A549 (cell line): ENCODE measurements at regions of chr1 and their contacts with region 1.

Region 1: DNA sequence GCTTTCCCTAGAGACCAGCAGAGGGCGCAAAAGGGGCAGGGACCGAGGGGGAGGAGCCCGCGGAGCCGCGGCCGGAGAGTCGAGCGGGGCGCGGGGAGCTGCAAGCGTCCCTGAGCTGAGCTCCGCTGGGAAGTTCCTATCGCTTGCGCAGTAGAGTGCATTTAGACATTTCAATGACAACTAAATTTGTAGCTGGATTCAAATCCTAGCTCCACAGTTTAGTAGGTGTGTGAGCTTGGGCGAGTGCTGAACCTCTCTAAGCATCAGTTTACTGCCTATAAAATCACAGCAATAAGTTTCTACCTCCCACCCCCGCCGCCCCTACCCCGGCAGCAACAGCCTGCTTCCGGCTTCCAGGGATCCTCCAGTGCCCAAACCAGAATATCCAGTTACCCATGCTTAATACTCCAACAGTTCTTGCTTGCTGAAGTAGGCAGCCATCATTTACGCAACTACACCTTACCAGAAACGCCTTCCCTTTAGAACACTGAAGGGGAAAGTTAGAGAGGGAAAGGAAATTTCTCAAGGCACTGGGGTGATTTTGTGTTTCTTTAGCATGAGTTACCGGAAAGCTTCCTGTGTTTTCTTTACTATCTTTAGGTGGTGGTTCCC is 9.1 kb downstream of the TLR5 start:
- DNase-seq: peak; percentile 78 to 87
- ATAC-seq: peak; percentile 77 to 90
- H3K4me3 ChIP-seq: peak overlapping the region; percentile 49
- H3K27ac ChIP-seq: peak overlapping the region; percentile 54 to 55; a peak in 4 of 6 replicates
- H3K4me1 ChIP-seq: peaks cover 38% of the 10 kb centered on the region
- CTCF ChIP-seq: peak; percentile 93
- EP300 ChIP-seq: no peak
- POLR2A ChIP-seq: no peak
- RAD21 ChIP-seq: peak; percentile 71 to 82

Region 2: GRCh38 chr1:222938986-222939385 is 194.9 kb before region 1 on chr1:
- CTCF ChIA-PET with region 1: no interaction called
- POLR2A ChIA-PET with region 1: no interaction called
- DNase-seq: no peak
- ATAC-seq: no peak
- H3K4me3 ChIP-seq: no peak overlapping the region
- H3K27ac ChIP-seq: no peak overlapping the region
- H3K4me1 ChIP-seq: no peaks in the 10 kb centered on the region; the same call in 2 of the 3 replicates
- CTCF ChIP-seq: no peak
- EP300 ChIP-seq: no peak
- POLR2A ChIP-seq: no peak
- RAD21 ChIP-seq: no peak

Region 3: DNA sequence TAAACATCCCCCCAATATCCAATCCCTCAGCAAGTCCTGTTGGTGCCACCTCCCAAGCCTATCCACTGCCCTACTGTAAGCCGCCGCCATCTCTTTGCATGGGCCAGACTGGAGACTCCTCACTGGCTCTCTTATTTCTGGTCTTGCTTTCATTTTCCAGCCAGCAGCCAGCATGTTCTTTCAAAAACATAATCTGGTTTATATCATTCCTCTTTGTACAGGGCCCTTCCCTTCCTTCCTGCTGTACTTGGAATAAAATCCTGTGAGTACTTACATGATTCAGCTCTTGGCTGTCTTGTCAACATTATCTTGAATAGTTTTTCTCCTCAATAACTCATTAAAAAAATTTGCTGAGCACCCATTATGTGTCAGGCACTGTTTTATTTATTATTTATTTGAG is 19.1 kb before region 1 on chr1:
- CTCF ChIA-PET with region 1: interaction called, 18 read pairs
- POLR2A ChIA-PET with region 1: no interaction called
- DNase-seq: no peak
- ATAC-seq: no peak
- H3K4me3 ChIP-seq: no peak overlapping the region
- H3K27ac ChIP-seq: no peak overlapping the region
- H3K4me1 ChIP-seq: no peaks in the 10 kb centered on the region
- CTCF ChIP-seq: no peak
- EP300 ChIP-seq: no peak
- POLR2A ChIP-seq: no peak
- RAD21 ChIP-seq: no peak

Region 4: DNA sequence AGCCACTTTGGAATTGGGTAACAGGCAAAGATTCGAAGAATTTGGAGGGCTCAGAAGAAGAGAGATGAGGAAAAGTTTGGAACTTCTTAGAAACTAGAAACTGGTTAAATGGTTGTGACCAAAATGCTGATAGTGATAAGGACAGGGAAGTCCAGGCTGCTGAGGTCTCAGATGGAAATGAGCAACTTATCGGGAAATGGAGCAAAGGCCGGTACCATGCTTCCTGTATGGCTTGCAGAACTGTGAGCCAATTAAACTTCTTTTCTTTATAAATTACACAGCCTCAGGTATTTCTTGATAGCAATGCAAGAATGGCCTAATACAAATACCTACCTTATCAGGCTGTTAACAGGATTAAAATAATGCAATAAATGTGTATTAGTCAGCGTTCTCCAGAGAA is 18.5 kb after region 1 on chr1:
- CTCF ChIA-PET with region 1: interaction called, 22 read pairs
- POLR2A ChIA-PET with region 1: no interaction called
- DNase-seq: no peak
- ATAC-seq: no peak
- H3K4me3 ChIP-seq: no peak overlapping the region
- H3K27ac ChIP-seq: no peak overlapping the region
- H3K4me1 ChIP-seq: no peaks in the 10 kb centered on the region
- CTCF ChIP-seq: no peak
- EP300 ChIP-seq: no peak
- POLR2A ChIP-seq: no peak
- RAD21 ChIP-seq: no peak

Region 5: DNA sequence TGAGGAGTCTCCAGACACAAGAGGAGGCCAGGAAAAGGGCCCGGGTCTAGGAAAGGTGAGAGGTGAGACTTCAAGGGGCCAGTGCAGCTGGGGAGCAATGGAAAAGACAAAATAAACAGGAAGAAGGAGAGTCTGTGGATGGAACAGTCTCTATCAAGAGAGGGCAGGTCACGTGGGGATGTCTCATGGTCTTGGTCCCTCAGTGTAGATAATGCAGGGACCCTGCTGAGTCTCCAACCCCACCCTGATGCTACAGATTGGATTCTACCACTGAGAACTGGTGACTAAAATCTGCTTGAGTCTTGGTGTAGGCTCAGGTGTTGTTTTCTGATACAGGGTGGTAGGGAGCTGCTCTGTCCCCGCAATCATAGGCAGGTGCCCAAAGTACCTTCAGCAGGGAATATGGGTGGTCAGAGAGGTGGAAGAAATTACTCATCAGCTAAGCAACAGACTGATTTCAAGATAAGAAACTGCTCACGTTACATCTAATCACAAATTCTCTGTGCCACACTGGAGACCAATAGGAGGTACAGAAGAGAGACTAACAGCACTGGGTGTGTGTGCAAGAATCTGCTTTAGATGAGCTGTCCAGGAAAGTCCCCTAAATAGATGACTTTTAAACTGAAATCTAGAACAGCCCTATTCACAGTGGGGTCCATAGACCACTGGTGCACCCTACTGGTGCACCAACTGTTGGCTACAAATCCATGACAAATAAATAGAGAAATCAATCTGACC is 110.6 kb after region 1 on chr1:
- CTCF ChIA-PET with region 1: interaction called, 21 read pairs
- POLR2A ChIA-PET with region 1: no interaction called
- DNase-seq: no peak
- ATAC-seq: peak; percentile 30 to 53; a peak in 4 of 6 replicates
- H3K4me3 ChIP-seq: no peak overlapping the region
- H3K27ac ChIP-seq: no peak overlapping the region
- H3K4me1 ChIP-seq: no peaks in the 10 kb centered on the region
- CTCF ChIP-seq: peak; percentile 19; the same call in 2 of the 3 replicates
- EP300 ChIP-seq: no peak
- POLR2A ChIP-seq: no peak
- RAD21 ChIP-seq: peak; percentile 20 to 37; a peak in 2 of 5 replicates

Region 6: GRCh38 chr1:223358826-223359225 is 224.9 kb after region 1 on chr1:
- CTCF ChIA-PET with region 1: interaction called, 16 read pairs
- POLR2A ChIA-PET with region 1: no interaction called
- DNase-seq: no peak
- ATAC-seq: 0 out of 6 replicates have a peak, but pooled peaks of 1 of the 2 experiments have one; percentile 37
- H3K4me3 ChIP-seq: no peak overlapping the region
- H3K27ac ChIP-seq: no peak overlapping the region
- H3K4me1 ChIP-seq: no peaks in the 10 kb centered on the region
- CTCF ChIP-seq: no peak
- EP300 ChIP-seq: no peak
- POLR2A ChIP-seq: no peak
- RAD21 ChIP-seq: no peak

Region 7: GRCh38 chr1:223620297-223620897 is 486.5 kb after region 1 on chr1:
- CTCF ChIA-PET with region 1: interaction called, 12 read pairs
- POLR2A ChIA-PET with region 1: no interaction called
- DNase-seq: no peak
- ATAC-seq: no peak
- H3K4me3 ChIP-seq: no peak overlapping the region
- H3K27ac ChIP-seq: no peak overlapping the region
- H3K4me1 ChIP-seq: no peaks in the 10 kb centered on the region
- CTCF ChIP-seq: no peak
- EP300 ChIP-seq: no peak
- POLR2A ChIP-seq: no peak
- RAD21 ChIP-seq: no peak

Region 8: GRCh38 chr1:223670458-223671168 is 536.7 kb after region 1 on chr1:
- CTCF ChIA-PET with region 1: interaction called, 11 read pairs
- POLR2A ChIA-PET with region 1: no interaction called
- DNase-seq: peak; percentile 51 to 68
- ATAC-seq: peak; percentile 81 to 95
- H3K4me3 ChIP-seq: no peak overlapping the region
- H3K27ac ChIP-seq: no peak overlapping the region
- H3K4me1 ChIP-seq: peaks cover 18% of the 10 kb centered on the region
- CTCF ChIP-seq: peak; percentile 62
- EP300 ChIP-seq: no peak
- POLR2A ChIP-seq: no peak
- RAD21 ChIP-seq: peak; percentile 74 to 83